Activated CD4-positive, alpha-beta T cell treated with anti-CD3 and anti-CD28 coated beads for 36 hours (primary cell): ENCODE measurements at regions of chr2 and their contacts with region 1.

Region 1: DNA sequence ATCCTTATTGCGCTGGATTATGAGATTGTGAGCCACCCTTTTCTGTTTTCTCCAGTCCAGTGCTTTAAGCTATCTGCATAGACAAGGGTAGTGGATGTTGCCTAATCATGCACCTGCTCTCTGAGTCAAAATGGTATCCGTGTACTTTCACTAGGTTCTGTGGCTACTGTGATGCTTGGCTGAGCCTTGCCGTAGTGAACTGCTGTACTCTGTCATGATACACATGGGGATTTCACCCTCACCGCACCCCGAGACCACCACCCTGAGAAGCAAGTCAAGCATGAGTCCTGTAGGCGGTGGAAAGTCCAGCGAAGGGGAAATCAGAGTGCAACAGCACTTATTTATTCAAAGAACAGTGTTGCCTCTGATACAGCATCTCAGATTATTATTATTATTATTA is 55.0 kb downstream of the ARHGAP25 start:
- DNase-seq: peak; percentile 70
- ATAC-seq: peak; percentile 85
- H3K4me3 Mint-ChIP-seq: no peak overlapping the region
- H3K27ac Mint-ChIP-seq: peak overlapping the region; percentile 64
- H3K4me1 Mint-ChIP-seq: peaks cover 54% of the 10 kb centered on the region
- H3K27me3 Mint-ChIP-seq: no peaks in the 10 kb centered on the region

Region 2: GRCh38 chr2:68774569-68775271 is 14.9 kb before region 1 on chr2:
- CTCF ChIA-PET with region 1: interaction called, 6 read pairs
- POLR2A ChIA-PET with region 1: interaction called, 3 read pairs
- intact Hi-C with region 1: loop called in 1 of 2 experiments (anchors 2 kb)
- DNase-seq: peak; percentile 79
- ATAC-seq: peak; percentile 68
- H3K4me3 Mint-ChIP-seq: peak overlapping the region; percentile 71
- H3K27ac Mint-ChIP-seq: peak overlapping the region; percentile 99
- H3K4me1 Mint-ChIP-seq: peaks cover 84% of the 10 kb centered on the region
- H3K27me3 Mint-ChIP-seq: no peaks in the 10 kb centered on the region